GM12878 (cell line): ENCODE measurements at regions of chr2 and their contacts with region 1.

Region 1: GRCh38 chr2:95022309-95023221 is 2.9 kb upstream of the MAL start:
- DNase-seq: peak; percentile 69
- ATAC-seq: peak; percentile 88
- H3K4me3 ChIP-seq: no peak overlapping the region
- H3K27ac ChIP-seq: no peak overlapping the region
- H3K4me1 ChIP-seq: peaks cover 6% of the 10 kb centered on the region
- H3K27me3 ChIP-seq: peaks cover 0 to 2% of the 10 kb centered on the region in 2 experiments; a peak in 3 of 4 replicates
- CTCF ChIP-seq: peak; percentile 97 to 99 (median 99); a peak in 5 of 6 replicates
- EP300 ChIP-seq: no peak
- POLR2A ChIP-seq: no peak
- RAD21 ChIP-seq: peak; percentile 93

Region 2: GRCh38 chr2:95007822-95008221 is 14.7 kb before region 1 on chr2:
- CTCF ChIA-PET with region 1: interaction called, 18 read pairs
- POLR2A ChIA-PET with region 1: no interaction called
- RAD21 ChIA-PET with region 1: interaction called, 6 read pairs
- SMC1A ChIA-PET with region 1: interaction called, 4 read pairs
- in situ Hi-C with region 1: no loop called
- intact Hi-C with region 1: no loop called
- DNase-seq: no peak
- ATAC-seq: no peak
- H3K4me3 ChIP-seq: no peak overlapping the region
- H3K27ac ChIP-seq: no peak overlapping the region
- H3K4me1 ChIP-seq: peaks cover 10% of the 10 kb centered on the region
- H3K27me3 ChIP-seq: no peaks in the 10 kb centered on the region
- CTCF ChIP-seq: no peak
- EP300 ChIP-seq: no peak
- POLR2A ChIP-seq: no peak
- RAD21 ChIP-seq: no peak

Region 3: DNA sequence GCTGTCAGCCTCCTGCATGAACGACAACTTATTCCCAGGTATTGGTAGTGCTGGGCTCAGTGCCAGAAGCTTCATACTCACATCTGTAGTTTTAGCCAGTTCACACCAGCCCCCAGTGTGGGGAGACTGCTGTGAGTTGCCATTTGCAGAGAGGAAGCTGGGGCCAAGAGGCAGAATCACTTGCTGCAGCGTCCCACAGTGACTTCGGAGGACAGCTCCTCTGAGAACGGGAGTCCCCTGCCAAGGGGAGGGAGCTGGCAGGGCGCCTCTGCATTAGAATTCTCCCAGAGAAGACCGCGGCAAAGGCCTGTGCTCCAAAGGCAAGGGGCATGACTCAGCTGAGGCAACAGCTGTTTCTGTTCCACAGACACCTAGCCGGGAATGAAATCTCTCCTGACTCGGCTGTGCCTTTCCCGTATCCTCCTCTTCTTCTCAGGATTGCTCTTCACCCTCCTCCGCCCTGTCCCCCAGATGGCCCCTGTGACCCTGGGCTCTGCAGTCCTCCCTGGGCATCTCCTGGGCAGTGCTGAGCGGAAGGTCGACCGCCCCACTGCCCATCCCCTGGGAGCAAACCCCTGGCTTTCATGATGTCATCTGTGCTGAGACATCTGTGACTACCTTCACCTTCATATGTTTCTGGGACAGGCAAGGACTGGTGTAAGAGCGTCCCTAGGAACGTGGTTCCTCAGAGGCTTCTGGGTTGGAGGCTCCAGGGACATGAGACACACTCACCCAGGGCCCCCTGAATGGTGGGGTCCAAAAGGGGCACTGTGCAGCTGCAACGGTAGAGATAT is 20.9 kb after region 1 on chr2:
- CTCF ChIA-PET with region 1: interaction called, 58 read pairs
- POLR2A ChIA-PET with region 1: interaction called, 11 read pairs
- RAD21 ChIA-PET with region 1: interaction called, 61 read pairs
- SMC1A ChIA-PET with region 1: interaction called, 19 read pairs
- in situ Hi-C with region 1: no loop called
- intact Hi-C with region 1: no loop called
- DNase-seq: peak; percentile 75
- ATAC-seq: peak; percentile 67
- H3K4me3 ChIP-seq: no peak overlapping the region
- H3K27ac ChIP-seq: peak overlapping the region; percentile 51
- H3K4me1 ChIP-seq: peaks cover 48% of the 10 kb centered on the region
- H3K27me3 ChIP-seq: no peaks in the 10 kb centered on the region
- CTCF ChIP-seq: no peak; a peak in 1 of 6 replicates
- EP300 ChIP-seq: no peak
- POLR2A ChIP-seq: no peak
- RAD21 ChIP-seq: no peak

Region 4: GRCh38 chr2:95062242-95063085 is 39.9 kb after region 1 on chr2:
- CTCF ChIA-PET with region 1: interaction called, 134 read pairs
- POLR2A ChIA-PET with region 1: interaction called, 4 read pairs
- RAD21 ChIA-PET with region 1: interaction called, 92 read pairs
- SMC1A ChIA-PET with region 1: interaction called, 94 read pairs
- in situ Hi-C with region 1: no loop called
- intact Hi-C with region 1: no loop called
- DNase-seq: no peak
- ATAC-seq: peak; percentile 59
- H3K4me3 ChIP-seq: no peak overlapping the region
- H3K27ac ChIP-seq: peak overlapping the region; percentile 84
- H3K4me1 ChIP-seq: peaks cover 27% of the 10 kb centered on the region
- H3K27me3 ChIP-seq: no peaks in the 10 kb centered on the region
- CTCF ChIP-seq: no peak
- EP300 ChIP-seq: 0 out of 4 replicates have a peak, but pooled peaks of 1 of the 2 experiments have one; percentile 9
- POLR2A ChIP-seq: no peak
- RAD21 ChIP-seq: no peak

Region 5: GRCh38 chr2:95115418-95115817 is 92.9 kb after region 1 on chr2:
- CTCF ChIA-PET with region 1: interaction called, 111 read pairs
- POLR2A ChIA-PET with region 1: interaction called, 8 read pairs
- RAD21 ChIA-PET with region 1: interaction called, 37 read pairs
- SMC1A ChIA-PET with region 1: interaction called, 30 read pairs
- in situ Hi-C with region 1: loop called (anchors 5 kb)
- intact Hi-C with region 1: loop called (anchors 1 kb)
- DNase-seq: peak; percentile 25
- ATAC-seq: peak; percentile 95
- H3K4me3 ChIP-seq: no peak overlapping the region
- H3K27ac ChIP-seq: no peak overlapping the region
- H3K4me1 ChIP-seq: peaks cover 15% of the 10 kb centered on the region
- H3K27me3 ChIP-seq: no peaks in the 10 kb centered on the region
- CTCF ChIP-seq: peak; percentile 77 to 90 (median 83)
- EP300 ChIP-seq: no peak
- POLR2A ChIP-seq: no peak
- RAD21 ChIP-seq: peak; percentile 82